Gastrocnemius medialis (tissue), 4 donors: ENCODE measurements at regions of chr7 and their contacts with region 1.

Region 1: GRCh38 chr7:138002096-138002827 is 376 bp upstream of the CREB3L2 start:
- DNase-seq: peak; percentile 99
- ATAC-seq: peak; percentile 97 to 98
- H3K4me3 ChIP-seq: peak overlapping the region; percentile 82 to 98 (median 91)
- H3K27ac ChIP-seq: peak overlapping the region; percentile 91 to 95 (median 92)
- H3K4me1 ChIP-seq: peaks cover 26% of the 10 kb centered on the region in 2 donors
- H3K27me3 ChIP-seq: no peaks in the 10 kb centered on the region
- CTCF ChIP-seq: peak; percentile 77 to 89 (median 84)
- POLR2A ChIP-seq: no peak

Region 2: GRCh38 chr7:137656227-137656849 is 345.9 kb before region 1 on chr7:
- in situ Hi-C with region 1: loop called in 2 of 4 experiments (anchors 25 kb)
- intact Hi-C with region 1: no loop called
- DNase-seq: peak; percentile 26 to 49
- ATAC-seq: peak; percentile 66 to 70
- H3K4me3 ChIP-seq: no peak overlapping the region
- H3K27ac ChIP-seq: no peak overlapping the region
- H3K4me1 ChIP-seq: peaks cover 0 to 8% of the 10 kb centered on the region in 2 donors
- H3K27me3 ChIP-seq: no peaks in the 10 kb centered on the region
- CTCF ChIP-seq: peak; percentile 44 to 74 (median 53)
- POLR2A ChIP-seq: no peak

Region 3: DNA sequence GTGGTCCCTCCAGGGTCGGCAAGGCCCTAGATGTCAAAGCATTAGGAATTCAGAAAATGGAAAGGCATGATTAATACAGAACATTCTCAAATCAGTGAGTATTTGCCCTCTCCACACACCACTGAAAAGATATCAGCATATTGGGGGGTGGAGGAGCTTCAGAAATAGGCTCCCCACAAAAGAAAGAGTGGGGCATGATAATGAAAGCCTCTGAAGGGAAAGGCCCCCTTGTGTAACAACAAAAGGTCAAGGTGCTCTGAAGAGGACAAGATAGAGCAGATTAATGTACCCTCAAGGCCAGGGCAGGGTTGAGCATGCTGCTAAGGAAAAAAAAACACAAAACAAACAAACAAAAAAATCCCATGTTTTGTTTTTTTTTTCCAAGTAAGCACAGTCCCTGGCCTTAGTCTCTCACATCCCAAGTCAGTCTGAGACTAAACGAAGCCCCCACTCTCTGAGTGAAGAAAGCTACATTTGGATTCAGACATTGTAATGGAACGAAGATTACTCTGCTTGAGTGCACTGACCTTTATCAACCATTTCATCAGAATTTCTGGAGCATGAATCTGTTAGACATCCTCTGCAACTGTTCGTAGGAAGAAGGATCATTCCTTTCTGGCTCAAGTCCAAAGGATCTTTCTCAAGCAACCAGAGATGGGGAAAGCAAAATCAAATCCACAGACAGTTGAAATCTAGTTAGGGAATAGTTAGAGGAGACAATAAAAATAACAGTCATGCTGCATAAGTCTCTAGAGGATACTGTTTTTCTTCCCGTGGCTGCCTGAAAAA is 128.1 kb before region 1 on chr7:
- in situ Hi-C with region 1: no loop called
- intact Hi-C with region 1: no loop called
- DNase-seq: no peak
- ATAC-seq: peak; percentile 7 to 19
- H3K4me3 ChIP-seq: no peak overlapping the region
- H3K27ac ChIP-seq: peak overlapping the region; percentile 61 to 91 (median 89)
- H3K4me1 ChIP-seq: peaks cover 34 to 69% of the 10 kb centered on the region in 2 donors
- H3K27me3 ChIP-seq: no peaks in the 10 kb centered on the region
- CTCF ChIP-seq: no peak
- POLR2A ChIP-seq: no peak

Region 4: DNA sequence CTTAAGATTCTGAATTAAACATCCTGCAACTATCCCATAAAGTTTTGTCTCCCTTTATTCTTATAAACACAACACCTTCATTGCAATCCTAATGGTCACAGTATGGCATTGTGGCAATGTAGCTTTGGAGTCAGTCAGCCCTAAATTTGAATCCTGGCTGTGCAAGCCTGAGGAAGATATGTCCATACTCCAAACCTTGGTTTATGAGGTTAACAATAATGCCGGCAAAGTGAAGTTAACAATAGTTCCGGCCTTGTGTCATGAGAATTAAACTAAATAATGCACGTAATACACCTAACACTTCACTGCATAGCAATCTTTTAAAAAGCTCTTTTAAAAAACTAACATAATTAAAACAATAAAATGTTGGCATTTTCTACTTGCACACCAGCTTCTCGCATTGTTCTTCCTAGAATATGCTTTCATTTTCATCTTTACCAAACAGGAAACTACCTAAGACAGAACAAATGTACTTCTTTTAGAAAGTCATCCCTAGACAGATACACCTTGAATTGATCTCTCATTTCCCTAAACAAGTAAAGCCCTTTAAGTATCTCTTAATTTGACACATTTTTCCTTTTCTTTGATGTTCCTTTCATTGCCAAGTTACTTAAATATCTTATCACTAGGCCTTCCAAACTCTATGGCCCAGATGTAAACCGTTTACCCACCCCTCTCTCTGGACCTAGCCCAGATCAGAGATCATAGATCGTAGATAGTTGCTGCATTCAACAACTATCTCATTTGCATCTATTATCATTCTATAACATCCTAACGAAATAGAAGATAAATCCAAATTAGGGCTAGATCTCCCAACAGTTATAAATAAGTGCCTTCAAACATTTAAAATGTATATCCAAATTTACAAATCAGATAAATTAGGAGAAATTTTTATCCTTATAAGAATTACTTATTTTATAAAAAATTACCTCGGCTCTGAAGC is 67.0 kb before region 1 on chr7:
- in situ Hi-C with region 1: no loop called
- intact Hi-C with region 1: loop called (anchors 2 kb)
- DNase-seq: no peak
- ATAC-seq: no peak
- H3K4me3 ChIP-seq: no peak overlapping the region
- H3K27ac ChIP-seq: peak overlapping the region in 2 of 4 donors; percentile 6 to 81
- H3K4me1 ChIP-seq: peaks cover 52% of the 10 kb centered on the region in 2 donors
- H3K27me3 ChIP-seq: no peaks in the 10 kb centered on the region
- CTCF ChIP-seq: no peak
- POLR2A ChIP-seq: no peak

Region 5: GRCh38 chr7:138396251-138397070 is 394.2 kb after region 1 on chr7:
- in situ Hi-C with region 1: no loop called
- intact Hi-C with region 1: no loop called
- DNase-seq: no peak
- ATAC-seq: no peak
- H3K4me3 ChIP-seq: no peak overlapping the region
- H3K27ac ChIP-seq: no peak overlapping the region
- H3K4me1 ChIP-seq: no peaks in the 10 kb centered on the region
- H3K27me3 ChIP-seq: no peaks in the 10 kb centered on the region
- CTCF ChIP-seq: no peak
- POLR2A ChIP-seq: no peak

Region 6: GRCh38 chr7:138459413-138460175 is 457.3 kb after region 1 on chr7:
- in situ Hi-C with region 1: no loop called
- intact Hi-C with region 1: loop called (anchors 5 kb)
- DNase-seq: peak in 1 of 2 donors; percentile 95
- ATAC-seq: peak; percentile 87 to 93
- H3K4me3 ChIP-seq: peak overlapping the region; percentile 40 to 79 (median 59)
- H3K27ac ChIP-seq: peak overlapping the region; percentile 48 to 85 (median 72)
- H3K4me1 ChIP-seq: peaks cover 8 to 10% of the 10 kb centered on the region in 2 donors
- H3K27me3 ChIP-seq: no peaks in the 10 kb centered on the region
- CTCF ChIP-seq: peak in 4 of 5 experiments; percentile 18 to 57 (median 32)
- POLR2A ChIP-seq: no peak